CD4-positive, alpha-beta T cell (primary cell): ENCODE measurements at regions of chr10 and their contacts with region 1.

Region 1: DNA sequence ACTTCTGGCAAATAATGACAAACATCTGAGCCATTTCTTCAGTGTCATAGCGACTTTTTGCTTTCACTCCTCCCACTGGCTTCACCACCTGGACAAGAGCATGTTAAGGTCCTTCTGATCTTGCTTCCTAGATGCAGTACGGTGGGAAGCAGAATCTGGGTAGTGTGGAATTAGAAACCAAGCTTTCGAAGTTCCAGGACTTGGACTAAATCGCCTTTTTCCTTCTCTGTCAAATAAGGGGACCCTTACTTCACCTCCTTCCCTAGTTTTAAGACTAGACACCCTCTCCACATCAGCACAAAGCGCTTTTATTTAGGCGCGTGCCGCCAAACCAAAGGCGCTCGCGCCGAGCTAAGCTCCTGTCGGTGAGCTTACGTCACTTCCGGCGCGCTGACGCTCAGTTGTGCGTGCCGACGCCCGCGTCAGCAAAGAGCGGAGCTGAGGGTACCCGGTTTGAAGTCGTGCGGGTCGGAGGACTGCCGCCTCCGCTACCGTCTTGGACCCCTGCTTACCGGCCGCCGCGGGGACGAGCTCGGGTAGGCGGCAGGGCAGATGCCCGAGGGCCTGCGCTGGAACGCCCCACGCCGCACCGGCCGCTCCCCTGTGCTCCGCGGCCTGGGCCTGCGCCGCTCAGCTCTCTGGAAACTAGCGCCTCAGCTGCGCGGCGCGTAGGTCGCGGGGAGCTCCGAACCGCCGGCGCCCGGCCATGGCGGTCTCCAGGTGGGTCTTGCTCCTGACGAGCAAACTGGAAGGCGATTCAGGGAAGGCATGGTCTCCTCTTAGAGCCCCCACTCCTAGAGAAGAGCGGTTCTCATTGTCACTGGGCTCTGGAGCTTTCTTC is at the start of gene BTAF1:
- DNase-seq: peak; percentile 84 to 98 (median 90)
- ATAC-seq: peak; percentile 93
- H3K4me3 ChIP-seq: peak within 1 kb of the TSS; percentile 86
- H3K4me3 Mint-ChIP-seq: peak within 1 kb of the TSS; percentile 98
- H3K27ac ChIP-seq: peak within 1 kb of the TSS; percentile 93 to 97
- H3K27ac Mint-ChIP-seq: peak within 1 kb of the TSS; percentile 98
- H3K4me1 ChIP-seq: peaks cover 20% of the 10 kb centered on the region
- H3K4me1 Mint-ChIP-seq: peaks cover 47% of the 10 kb centered on the region
- H3K27me3 ChIP-seq: peaks cover 4 to 6% of the 10 kb centered on the region in 2 experiments
- H3K27me3 Mint-ChIP-seq: peaks cover under 1% of the 10 kb centered on the region
- CTCF ChIP-seq: no peak
- total RNA-seq, gene BTAF1: 80.8 to 85.8 TPM

Region 2: GRCh38 chr10:91220194-91220953 is 703.2 kb before region 1 on chr10 and contains the start of gene PCGF5:
- CTCF ChIA-PET with region 1: no interaction called
- POLR2A ChIA-PET with region 1: no interaction called
- intact Hi-C with region 1: loop called in 1 of 2 experiments (anchors 10 kb)
- DNase-seq: peak; percentile 81 to 96 (median 91)
- ATAC-seq: peak; percentile 94
- H3K4me3 ChIP-seq: peak within 1 kb of the TSS; percentile 59
- H3K4me3 Mint-ChIP-seq: peak within 1 kb of the TSS; percentile 89
- H3K27ac ChIP-seq: peak within 1 kb of the TSS in 1 of 2 donors; percentile 65
- H3K27ac Mint-ChIP-seq: peak within 1 kb of the TSS; percentile 84
- H3K4me1 ChIP-seq: peaks cover 21% of the 10 kb centered on the region
- H3K4me1 Mint-ChIP-seq: peaks cover 44% of the 10 kb centered on the region
- H3K27me3 ChIP-seq: no peaks in the 10 kb centered on the region
- H3K27me3 Mint-ChIP-seq: no peaks in the 10 kb centered on the region
- CTCF ChIP-seq: no peak
- total RNA-seq, gene PCGF5: 57.7 to 58.4 TPM

Region 3: GRCh38 chr10:91409869-91410637 is 513.5 kb before region 1 on chr10 and contains the start of gene HECTD2:
- CTCF ChIA-PET with region 1: interaction called, 3 read pairs
- POLR2A ChIA-PET with region 1: interaction called, 8 read pairs
- intact Hi-C with region 1: loop called in 1 of 2 experiments (anchors 5 kb)
- DNase-seq: peak; percentile 61 to 94 (median 82)
- ATAC-seq: peak; percentile 85
- H3K4me3 ChIP-seq: peak within 1 kb of the TSS; percentile 92
- H3K4me3 Mint-ChIP-seq: peak within 1 kb of the TSS; percentile 92
- H3K27ac ChIP-seq: peak within 1 kb of the TSS; percentile 82 to 86
- H3K27ac Mint-ChIP-seq: peak within 1 kb of the TSS; percentile 86
- H3K4me1 ChIP-seq: peaks cover 14% of the 10 kb centered on the region
- H3K4me1 Mint-ChIP-seq: peaks cover 11% of the 10 kb centered on the region
- H3K27me3 ChIP-seq: peaks cover 3 to 8% of the 10 kb centered on the region in 2 experiments
- H3K27me3 Mint-ChIP-seq: no peaks in the 10 kb centered on the region
- CTCF ChIP-seq: peak; percentile 19
- total RNA-seq, gene HECTD2: 0.92 to 1.0 TPM

Region 4: GRCh38 chr10:91887272-91888076 is 36.1 kb before region 1 on chr10:
- CTCF ChIA-PET with region 1: no interaction called
- POLR2A ChIA-PET with region 1: interaction called, 10 read pairs
- intact Hi-C with region 1: no loop called
- DNase-seq: peak in 11 of 14 experiments; percentile 0 to 39 (median 12)
- ATAC-seq: peak; percentile 69
- H3K4me3 ChIP-seq: peak overlapping the region; percentile 59
- H3K4me3 Mint-ChIP-seq: peak overlapping the region; percentile 92
- H3K27ac ChIP-seq: no peak overlapping the region
- H3K27ac Mint-ChIP-seq: no peak overlapping the region
- H3K4me1 ChIP-seq: peaks cover 9% of the 10 kb centered on the region
- H3K4me1 Mint-ChIP-seq: peaks cover 8% of the 10 kb centered on the region
- H3K27me3 ChIP-seq: no peaks in the 10 kb centered on the region
- H3K27me3 Mint-ChIP-seq: peaks cover 29% of the 10 kb centered on the region
- CTCF ChIP-seq: no peak

Region 5: GRCh38 chr10:92031580-92031979 is 108.0 kb after region 1 on chr10:
- CTCF ChIA-PET with region 1: no interaction called
- POLR2A ChIA-PET with region 1: no interaction called
- intact Hi-C with region 1: no loop called
- DNase-seq: no peak
- ATAC-seq: no peak
- H3K4me3 ChIP-seq: no peak overlapping the region
- H3K4me3 Mint-ChIP-seq: no peak overlapping the region
- H3K27ac ChIP-seq: no peak overlapping the region
- H3K27ac Mint-ChIP-seq: no peak overlapping the region
- H3K4me1 ChIP-seq: no peaks in the 10 kb centered on the region
- H3K4me1 Mint-ChIP-seq: no peaks in the 10 kb centered on the region
- H3K27me3 ChIP-seq: no peaks in the 10 kb centered on the region
- H3K27me3 Mint-ChIP-seq: no peaks in the 10 kb centered on the region
- CTCF ChIP-seq: no peak

Region 6: GRCh38 chr10:92290837-92291615 is 367.4 kb after region 1 on chr10 and contains the starts of genes CPEB3 and MARCHF5:
- CTCF ChIA-PET with region 1: no interaction called
- POLR2A ChIA-PET with region 1: interaction called, 6 read pairs
- intact Hi-C with region 1: loop called in 1 of 2 experiments (anchors 5 kb)
- DNase-seq: peak; percentile 80 to 97 (median 87)
- ATAC-seq: peak; percentile 97
- H3K4me3 ChIP-seq: peak within 1 kb of the TSS; percentile 97
- H3K4me3 Mint-ChIP-seq: peak within 1 kb of the TSS; percentile 97
- H3K27ac ChIP-seq: peak within 1 kb of the TSS; percentile 37 to 50
- H3K27ac Mint-ChIP-seq: peak within 1 kb of the TSS; percentile 87
- H3K4me1 ChIP-seq: peaks cover 29% of the 10 kb centered on the region
- H3K4me1 Mint-ChIP-seq: peaks cover 33% of the 10 kb centered on the region
- H3K27me3 ChIP-seq: no peaks in the 10 kb centered on the region
- H3K27me3 Mint-ChIP-seq: no peaks in the 10 kb centered on the region
- CTCF ChIP-seq: peak; percentile 44
- total RNA-seq, gene CPEB3: 1.2 to 1.3 TPM
- total RNA-seq, gene MARCHF5: 33.5 to 36.1 TPM

Region 7: DNA sequence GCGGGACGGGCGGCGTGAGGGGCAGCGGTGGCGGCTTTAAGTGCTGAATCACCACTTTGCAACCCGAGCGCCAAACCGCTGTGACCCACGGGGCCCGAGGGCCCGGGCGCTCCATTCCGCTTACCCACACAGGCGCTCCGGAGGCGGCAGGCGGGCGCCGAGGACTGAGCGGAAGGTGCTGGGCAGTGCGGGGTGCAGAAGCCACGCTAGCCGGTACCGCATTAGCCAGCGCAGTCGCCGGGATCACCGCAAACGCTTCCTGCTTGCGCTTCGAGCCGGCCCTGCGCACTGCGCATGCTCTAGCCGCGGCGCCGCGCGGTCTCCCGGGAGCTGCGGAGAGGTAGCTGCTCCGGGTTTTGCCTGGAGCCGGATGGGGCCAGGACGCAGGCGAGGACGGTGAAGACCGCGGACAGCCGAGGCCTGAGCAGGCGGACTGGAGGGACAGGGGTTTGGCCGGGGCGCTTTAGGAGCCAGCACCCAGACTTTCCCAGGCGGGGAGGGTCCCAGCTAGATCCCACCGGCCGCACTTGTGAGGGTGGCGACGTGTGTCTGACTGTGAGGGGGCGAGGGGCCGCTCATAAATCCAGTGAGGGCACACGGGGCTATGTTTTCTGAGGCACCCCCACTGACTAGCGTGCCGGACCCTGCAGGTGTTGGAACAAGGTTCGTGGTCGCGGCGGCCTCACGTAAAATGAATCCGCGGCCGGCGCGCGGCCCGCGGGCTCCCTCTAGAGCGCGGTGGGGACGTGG is 650.4 kb after region 1 on chr10 and contains the start of gene IDE:
- CTCF ChIA-PET with region 1: no interaction called
- POLR2A ChIA-PET with region 1: no interaction called
- intact Hi-C with region 1: loop called in 1 of 2 experiments (anchors 10 kb)
- DNase-seq: peak; percentile 64 to 91 (median 76)
- ATAC-seq: peak; percentile 73
- H3K4me3 ChIP-seq: peak within 1 kb of the TSS; percentile 96
- H3K4me3 Mint-ChIP-seq: peak within 1 kb of the TSS; percentile 93
- H3K27ac ChIP-seq: peak within 1 kb of the TSS; percentile 77
- H3K27ac Mint-ChIP-seq: peak within 1 kb of the TSS; percentile 88
- H3K4me1 ChIP-seq: peaks cover 19% of the 10 kb centered on the region
- H3K4me1 Mint-ChIP-seq: peaks cover 40% of the 10 kb centered on the region
- H3K27me3 ChIP-seq: no peaks in the 10 kb centered on the region
- H3K27me3 Mint-ChIP-seq: no peaks in the 10 kb centered on the region
- CTCF ChIP-seq: peak; percentile 91
- total RNA-seq, gene IDE: 15.2 to 17.8 TPM